ENCODE measurements at regions of chr12 and their contacts with region 1.

Region 1: DNA sequence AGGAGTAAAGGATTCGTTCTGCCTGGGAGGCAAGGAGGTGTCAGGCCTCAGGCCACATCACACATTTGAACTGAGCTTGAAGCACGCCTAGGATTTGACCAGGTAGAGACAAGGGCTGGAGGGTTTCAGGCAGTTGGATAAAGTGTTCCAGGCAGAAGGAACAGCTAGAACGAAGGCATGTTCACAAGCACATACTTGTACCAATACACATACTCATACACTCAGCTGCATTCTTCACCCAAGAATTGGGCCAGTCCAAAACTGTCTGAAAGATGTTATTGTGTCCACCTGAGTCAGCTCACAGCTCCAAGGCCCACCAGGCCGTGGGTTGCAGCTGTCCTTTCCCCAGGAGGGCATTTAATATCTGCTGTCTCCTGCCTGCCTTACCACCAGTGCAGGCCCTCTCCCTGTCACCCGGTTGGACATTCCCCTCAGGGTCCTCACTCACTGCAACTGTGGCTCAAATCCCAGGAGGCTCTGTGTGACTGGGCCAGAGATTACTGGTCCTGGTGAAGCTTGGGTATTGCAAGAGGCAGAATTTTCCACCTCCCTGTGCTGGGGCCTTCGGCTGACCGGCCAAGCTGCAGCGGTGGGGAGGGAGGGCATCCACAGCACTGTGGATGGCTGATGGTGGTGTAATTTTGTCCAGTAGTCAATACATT is 12.8 kb upstream of the AQP2 start:
- DNase-seq: peak; percentile 85
- H3K4me3 ChIP-seq: no peak overlapping the region
- H3K27ac ChIP-seq: peak overlapping the region; percentile 49
- H3K4me1 ChIP-seq: peaks cover 19% of the 10 kb centered on the region
- H3K27me3 ChIP-seq: no peaks in the 10 kb centered on the region
- CTCF ChIP-seq: no peak

Region 2: DNA sequence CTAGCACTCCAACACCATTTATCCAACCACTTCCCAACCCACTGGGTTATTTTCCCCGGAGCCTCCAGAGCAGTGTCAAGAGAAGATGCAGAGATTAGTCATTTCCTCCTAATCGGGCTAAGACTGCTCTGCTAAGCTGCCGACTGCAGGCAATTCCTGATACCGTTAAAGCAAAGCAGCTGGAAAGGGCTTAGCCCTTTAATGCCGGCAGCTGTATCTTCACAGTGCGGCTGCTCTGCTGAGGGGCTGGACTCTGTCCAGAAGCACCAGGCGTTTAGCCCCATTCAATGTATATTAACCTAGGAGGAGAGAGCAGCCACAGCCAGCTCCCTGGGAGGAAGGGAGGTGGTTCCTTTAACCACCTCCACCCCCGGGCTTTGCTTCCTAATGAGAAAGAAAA is 46.1 kb after region 1 on chr12:
- CTCF ChIA-PET with region 1: no interaction called
- dilution Hi-C with region 1: loop called (anchors 5 kb)
- in situ Hi-C with region 1: no loop called
- intact Hi-C with region 1: no loop called
- DNase-seq: peak; percentile 50
- H3K4me3 ChIP-seq: no peak overlapping the region
- H3K27ac ChIP-seq: no peak overlapping the region
- H3K4me1 ChIP-seq: peaks cover 14% of the 10 kb centered on the region
- H3K27me3 ChIP-seq: no peaks in the 10 kb centered on the region
- CTCF ChIP-seq: no peak

Measured in mammary epithelial cell (primary cell).